ENCODE measurements at regions of chr14 and their contacts with region 1.

Region 1: GRCh38 chr14:90399541-90400444 is 3.0 kb downstream of the CALM1 start:
- DNase-seq: peak; percentile 92
- H3K4me3 Mint-ChIP-seq: peak overlapping the region; percentile 97
- H3K27ac Mint-ChIP-seq: peak overlapping the region; percentile 99
- H3K4me1 Mint-ChIP-seq: peaks cover 52% of the 10 kb centered on the region
- H3K27me3 Mint-ChIP-seq: no peaks in the 10 kb centered on the region

Region 2: DNA sequence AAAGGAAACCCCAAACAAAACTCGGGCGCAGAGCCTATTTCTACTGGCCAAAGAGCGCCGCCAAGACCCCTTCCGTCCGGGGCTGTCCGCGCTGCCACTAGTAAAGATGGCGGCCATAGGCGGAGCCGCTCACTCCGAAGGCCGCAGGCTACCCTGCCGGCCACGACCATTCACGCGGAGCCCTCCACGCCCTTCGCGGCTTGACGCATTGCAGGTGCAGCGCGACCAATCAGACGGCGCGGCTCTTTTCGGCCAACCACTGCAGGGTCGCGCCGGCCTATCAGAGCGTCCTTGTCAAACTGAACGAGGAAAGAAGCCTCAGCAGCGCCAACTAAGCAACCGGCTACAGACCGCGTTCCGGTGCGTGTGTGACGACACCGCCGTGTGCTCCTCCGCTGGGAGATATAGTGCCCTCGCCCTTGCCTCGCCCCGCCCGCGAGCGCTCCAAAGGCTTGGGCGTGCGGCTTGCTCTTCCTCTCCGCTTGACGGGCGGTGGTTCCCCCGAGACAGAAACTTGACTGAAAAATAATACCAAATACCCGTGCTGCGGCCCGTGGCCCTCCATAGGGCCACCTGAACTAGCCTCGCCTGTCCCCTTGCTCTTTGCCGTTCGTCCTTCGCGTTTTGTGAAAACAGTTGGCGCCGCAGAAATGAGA is 16.6 kb before region 1 on chr14:
- CTCF ChIA-PET with region 1: interaction called, 80 read pairs
- POLR2A ChIA-PET with region 1: interaction called, 159 read pairs
- intact Hi-C with region 1: loop called (anchors 1 kb)
- DNase-seq: peak; percentile 99
- H3K4me3 Mint-ChIP-seq: no peak overlapping the region
- H3K27ac Mint-ChIP-seq: no peak overlapping the region
- H3K4me1 Mint-ChIP-seq: peaks cover 22% of the 10 kb centered on the region
- H3K27me3 Mint-ChIP-seq: no peaks in the 10 kb centered on the region

Region 3: DNA sequence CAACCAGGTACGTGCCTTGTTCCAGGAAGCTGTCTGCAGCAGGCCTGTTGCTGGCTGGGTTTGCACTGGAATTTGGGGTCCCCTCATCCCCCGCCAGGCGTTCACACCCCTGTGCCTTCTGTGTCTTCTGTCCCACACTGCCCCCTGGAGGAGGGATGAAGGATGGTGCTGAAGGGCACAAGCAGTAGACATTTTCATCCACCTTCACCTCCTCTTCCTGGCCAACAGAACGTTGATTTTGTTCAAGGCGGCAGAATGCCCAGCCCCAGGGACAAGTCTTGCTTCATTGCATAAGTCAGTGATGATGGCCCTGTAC is 119.1 kb after region 1 on chr14:
- CTCF ChIA-PET with region 1: interaction called, 6 read pairs
- POLR2A ChIA-PET with region 1: no interaction called
- intact Hi-C with region 1: loop called (anchors 1 kb)
- DNase-seq: peak; percentile 64
- H3K4me3 Mint-ChIP-seq: no peak overlapping the region
- H3K27ac Mint-ChIP-seq: no peak overlapping the region
- H3K4me1 Mint-ChIP-seq: no peaks in the 10 kb centered on the region
- H3K27me3 Mint-ChIP-seq: no peaks in the 10 kb centered on the region

Region 4: DNA sequence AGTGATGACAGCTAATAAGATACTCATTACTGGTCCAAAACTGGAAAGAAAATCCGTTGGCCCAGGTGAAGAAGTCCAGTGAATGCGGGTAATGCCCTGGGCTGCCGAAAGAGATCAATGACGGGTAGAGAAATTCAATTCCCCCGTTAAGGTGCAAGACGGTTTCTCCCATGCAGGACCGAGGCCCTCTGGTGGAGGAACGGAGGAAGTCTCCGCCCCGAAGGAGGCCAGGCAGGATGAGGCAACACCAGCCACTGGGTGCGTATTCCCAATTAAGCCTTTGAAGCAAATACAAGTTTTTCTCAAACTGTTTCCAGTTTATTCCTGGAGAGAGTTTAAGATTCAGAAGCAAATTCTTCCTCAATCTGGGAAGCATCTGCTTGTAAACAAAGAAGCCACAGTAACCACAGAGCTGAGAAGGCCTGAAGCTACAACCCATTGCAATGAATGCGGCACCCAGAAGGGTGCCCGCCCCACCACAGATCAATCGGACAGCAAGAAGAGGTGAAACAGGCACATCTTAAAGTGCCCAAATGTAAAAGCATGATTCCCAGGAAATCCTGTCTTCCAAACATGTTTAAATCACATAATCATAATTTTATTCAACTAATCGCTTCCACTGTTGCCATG is 297.9 kb after region 1 on chr14:
- CTCF ChIA-PET with region 1: interaction called, 19 read pairs
- POLR2A ChIA-PET with region 1: interaction called, 3 read pairs
- intact Hi-C with region 1: loop called (anchors 1 kb)
- DNase-seq: peak; percentile 84
- H3K4me3 Mint-ChIP-seq: no peak overlapping the region
- H3K27ac Mint-ChIP-seq: no peak overlapping the region
- H3K4me1 Mint-ChIP-seq: no peaks in the 10 kb centered on the region
- H3K27me3 Mint-ChIP-seq: no peaks in the 10 kb centered on the region

Measured in activated CD4-positive, alpha-beta memory T cell treated with anti-CD3 and anti-CD28 coated beads for 36 hours (primary cell).